Panc1 (cell line): ENCODE measurements at regions of chr11 and their contacts with region 1.

Region 1: DNA sequence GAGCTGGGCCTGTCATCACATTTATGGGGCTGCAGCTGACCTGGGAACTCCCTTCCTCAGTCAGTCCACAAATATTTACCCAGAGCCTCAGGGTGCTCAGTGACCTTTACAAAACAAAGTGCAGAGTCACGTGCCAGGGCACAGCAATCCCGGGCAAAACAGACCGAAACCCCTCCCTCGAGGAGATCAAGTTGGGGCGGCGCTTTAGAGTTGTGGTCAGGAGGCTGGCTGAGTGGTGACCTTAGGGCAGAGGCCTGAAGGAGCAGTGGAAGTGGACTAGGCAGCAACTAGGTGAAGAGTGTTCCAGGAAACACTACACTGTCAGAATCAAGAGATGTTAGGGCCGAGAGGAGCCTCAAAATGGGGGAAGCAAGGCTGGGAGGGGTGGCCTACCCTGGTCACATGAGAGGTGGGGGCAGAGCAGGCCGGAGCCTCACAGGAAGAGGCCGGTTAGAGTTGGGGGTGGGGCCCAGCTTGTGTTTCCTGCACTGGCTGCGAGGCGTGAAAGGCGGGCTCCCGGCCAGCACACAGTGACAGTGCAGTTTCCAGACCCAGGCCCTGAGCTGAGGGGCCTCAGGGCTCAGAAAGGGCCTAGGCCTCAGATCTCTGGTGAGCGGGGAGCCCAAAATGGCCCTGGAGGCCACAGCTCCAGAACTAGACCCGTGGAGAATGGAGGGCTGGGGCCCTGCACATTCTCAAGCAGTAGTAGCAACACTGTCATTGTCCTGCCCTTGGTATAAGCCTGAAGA is 3.7 kb upstream of the NEAT1 start:
- DNase-seq: peak; percentile 98
- ATAC-seq: peak; percentile 51
- H3K4me3 ChIP-seq: peak overlapping the region; percentile 3 to 38
- H3K27ac ChIP-seq: peak overlapping the region; percentile 100
- H3K4me1 ChIP-seq: peaks cover 71% of the 10 kb centered on the region
- H3K27me3 ChIP-seq: no peaks in the 10 kb centered on the region
- CTCF ChIP-seq: no peak

Region 2: GRCh38 chr11:65314501-65315203 is 104.2 kb before region 1 on chr11 and contains the start of gene CDC42EP2:
- CTCF ChIA-PET with region 1: no interaction called
- POLR2A ChIA-PET with region 1: interaction called, 12 read pairs
- in situ Hi-C with region 1: no loop called
- intact Hi-C with region 1: no loop called
- DNase-seq: no peak
- ATAC-seq: peak; percentile 88
- H3K4me3 ChIP-seq: peak within 1 kb of the TSS; percentile 74 to 75
- H3K27ac ChIP-seq: peak within 1 kb of the TSS; percentile 76
- H3K4me1 ChIP-seq: peaks cover 22% of the 10 kb centered on the region
- H3K27me3 ChIP-seq: no peaks in the 10 kb centered on the region
- CTCF ChIP-seq: no peak
- total RNA-seq, gene CDC42EP2: 8.1 TPM

Region 3: DNA sequence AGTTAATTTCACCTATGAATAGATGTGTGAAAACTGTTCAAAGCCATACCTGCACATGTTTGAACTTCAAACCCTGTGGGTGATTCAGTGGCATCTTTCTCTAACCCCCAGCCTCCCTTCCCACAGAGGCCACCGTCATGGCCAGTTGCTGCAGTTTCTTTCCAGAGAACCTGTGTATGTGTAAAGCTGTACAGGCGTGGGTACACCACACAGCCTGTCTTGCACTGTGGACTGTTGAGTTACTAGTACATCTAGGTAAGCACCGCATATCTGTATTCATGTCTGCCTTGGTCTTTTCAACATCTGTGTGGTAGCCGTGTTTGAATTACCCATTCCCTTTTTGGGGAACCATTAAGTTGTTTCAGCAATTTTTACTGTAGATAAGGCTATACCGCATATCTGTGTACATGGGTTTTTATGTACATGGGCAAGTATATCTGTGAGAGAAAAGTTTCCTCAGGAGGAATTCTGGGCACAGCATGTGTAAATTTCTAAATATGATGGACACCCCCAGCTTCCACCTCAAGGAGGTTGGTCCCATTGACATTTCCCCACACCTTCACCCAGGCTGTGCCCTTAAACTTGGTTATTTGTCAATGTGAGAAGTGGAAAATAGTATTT is 17.6 kb after region 1 on chr11:
- CTCF ChIA-PET with region 1: interaction called, 5 read pairs
- POLR2A ChIA-PET with region 1: interaction called, 12 read pairs
- in situ Hi-C with region 1: no loop called
- intact Hi-C with region 1: no loop called
- DNase-seq: no peak
- ATAC-seq: peak; percentile 26
- H3K4me3 ChIP-seq: peak overlapping the region in 1 of 2 experiments; percentile 15; a peak in 2 of 4 replicates
- H3K27ac ChIP-seq: peak overlapping the region; percentile 78
- H3K4me1 ChIP-seq: peaks cover 98% of the 10 kb centered on the region
- H3K27me3 ChIP-seq: no peaks in the 10 kb centered on the region
- CTCF ChIP-seq: no peak

Region 4: GRCh38 chr11:65487413-65488272 is 68.8 kb after region 1 on chr11:
- CTCF ChIA-PET with region 1: no interaction called
- POLR2A ChIA-PET with region 1: interaction called, 12 read pairs
- in situ Hi-C with region 1: no loop called
- intact Hi-C with region 1: no loop called
- DNase-seq: peak; percentile 96
- ATAC-seq: peak; percentile 82
- H3K4me3 ChIP-seq: 0 out of 4 replicates have a peak overlapping the region, but pooled peaks of 1 of the 2 experiments have one; percentile 3
- H3K27ac ChIP-seq: peak overlapping the region; percentile 100
- H3K4me1 ChIP-seq: peaks cover 87% of the 10 kb centered on the region
- H3K27me3 ChIP-seq: no peaks in the 10 kb centered on the region
- CTCF ChIP-seq: no peak

Region 5: GRCh38 chr11:65516135-65516935 is 97.5 kb after region 1 on chr11:
- CTCF ChIA-PET with region 1: interaction called, 4 read pairs
- POLR2A ChIA-PET with region 1: no interaction called
- in situ Hi-C with region 1: no loop called
- intact Hi-C with region 1: loop called (anchors 5 kb)
- DNase-seq: no peak
- ATAC-seq: peak; percentile 27; the same call in 1 of the 2 replicates
- H3K4me3 ChIP-seq: no peak overlapping the region
- H3K27ac ChIP-seq: peak overlapping the region; percentile 44; the same call in 1 of the 2 replicates
- H3K4me1 ChIP-seq: no peaks in the 10 kb centered on the region
- H3K27me3 ChIP-seq: no peaks in the 10 kb centered on the region
- CTCF ChIP-seq: no peak